Activated CD4-positive, alpha-beta memory T cell treated with anti-CD3 and anti-CD28 coated beads, Interleukin-2, amount 10 ng/mL, durations not matched to agents 7 days and 5 days (primary cell): ENCODE measurements at regions of chr3 and their contacts with region 1.

Region 1: DNA sequence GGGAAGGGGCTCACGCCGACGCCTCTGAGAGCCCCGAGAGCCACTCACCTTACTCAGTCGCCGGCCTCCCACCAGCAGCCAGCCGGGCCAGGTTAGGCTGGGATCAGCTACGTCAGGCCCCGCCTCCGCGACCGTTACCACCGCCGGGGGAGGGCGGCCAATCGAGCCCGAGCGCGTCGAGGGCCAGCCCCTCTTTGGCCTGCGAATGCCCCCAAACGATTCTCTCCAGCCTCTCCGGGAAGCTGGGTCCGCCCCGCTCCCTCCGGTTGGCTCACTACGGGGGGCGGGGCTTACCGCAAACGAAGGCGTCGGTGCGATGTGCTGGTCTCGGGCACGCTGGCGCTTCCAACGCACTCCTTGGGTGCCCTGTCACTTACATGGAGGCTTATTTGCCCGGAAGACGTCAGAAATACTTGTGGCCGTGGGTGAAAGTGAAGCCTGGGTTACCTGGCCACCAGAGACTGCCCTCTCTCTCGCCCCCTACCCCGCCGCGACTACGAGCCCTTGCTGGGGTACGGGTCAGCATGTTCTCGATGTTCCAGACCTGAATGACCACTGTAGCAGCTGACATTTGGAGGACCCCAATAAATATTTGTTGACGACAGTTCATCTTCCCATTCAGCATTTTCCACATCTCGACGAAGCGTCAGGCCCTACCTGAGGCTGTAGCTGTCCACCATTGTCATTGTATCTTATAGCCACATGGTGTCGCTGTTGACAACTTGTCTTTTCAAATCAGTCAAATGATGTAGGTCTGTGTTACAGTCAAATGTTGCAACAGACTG is at the start of gene CEP70:
- DNase-seq: peak; percentile 87
- H3K4me3 Mint-ChIP-seq: peak within 1 kb of the TSS; percentile 76
- H3K27ac Mint-ChIP-seq: peak within 1 kb of the TSS; percentile 69
- H3K4me1 Mint-ChIP-seq: peaks cover 11% of the 10 kb centered on the region
- H3K27me3 Mint-ChIP-seq: no peaks in the 10 kb centered on the region
- total RNA-seq, gene CEP70: 9.0 to 9.6 TPM

Region 2: DNA sequence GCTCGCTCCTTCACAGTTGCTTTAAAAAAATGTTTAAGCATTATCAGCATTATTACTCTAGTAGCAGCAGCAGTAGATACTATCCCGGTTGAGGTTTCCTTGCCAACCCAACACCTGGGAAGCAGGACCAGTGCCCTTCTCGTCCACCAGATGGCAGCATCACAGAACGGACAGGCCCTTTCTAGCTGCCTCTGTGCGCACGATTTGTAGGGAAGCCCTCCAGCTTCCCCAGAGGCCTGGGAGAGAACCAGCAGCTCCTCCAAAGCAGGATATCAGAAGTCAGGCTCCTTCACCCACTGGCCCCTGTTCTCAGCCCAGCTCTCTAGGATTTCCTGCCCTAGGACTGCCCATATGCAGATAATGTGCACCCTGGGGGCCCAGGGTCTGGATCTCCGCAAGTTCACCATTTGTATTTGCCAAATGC is 176.8 kb before region 1 on chr3:
- CTCF ChIA-PET with region 1: interaction called, 11 read pairs
- POLR2A ChIA-PET with region 1: no interaction called
- DNase-seq: peak; percentile 66
- H3K4me3 Mint-ChIP-seq: no peak overlapping the region
- H3K27ac Mint-ChIP-seq: no peak overlapping the region
- H3K4me1 Mint-ChIP-seq: peaks cover 1% of the 10 kb centered on the region
- H3K27me3 Mint-ChIP-seq: peaks cover 20% of the 10 kb centered on the region

Region 3: GRCh38 chr3:138434276-138434874 is 160.0 kb before region 1 on chr3 and contains the start of gene ESYT3:
- CTCF ChIA-PET with region 1: interaction called, 10 read pairs
- POLR2A ChIA-PET with region 1: interaction called, 6 read pairs
- DNase-seq: peak; percentile 72
- H3K4me3 Mint-ChIP-seq: peak within 1 kb of the TSS; percentile 72
- H3K27ac Mint-ChIP-seq: no peak within 1 kb of the TSS
- H3K4me1 Mint-ChIP-seq: peaks cover 15% of the 10 kb centered on the region
- H3K27me3 Mint-ChIP-seq: peaks cover 52% of the 10 kb centered on the region
- total RNA-seq, gene ESYT3: 0.43 to 0.50 TPM

Region 4: DNA sequence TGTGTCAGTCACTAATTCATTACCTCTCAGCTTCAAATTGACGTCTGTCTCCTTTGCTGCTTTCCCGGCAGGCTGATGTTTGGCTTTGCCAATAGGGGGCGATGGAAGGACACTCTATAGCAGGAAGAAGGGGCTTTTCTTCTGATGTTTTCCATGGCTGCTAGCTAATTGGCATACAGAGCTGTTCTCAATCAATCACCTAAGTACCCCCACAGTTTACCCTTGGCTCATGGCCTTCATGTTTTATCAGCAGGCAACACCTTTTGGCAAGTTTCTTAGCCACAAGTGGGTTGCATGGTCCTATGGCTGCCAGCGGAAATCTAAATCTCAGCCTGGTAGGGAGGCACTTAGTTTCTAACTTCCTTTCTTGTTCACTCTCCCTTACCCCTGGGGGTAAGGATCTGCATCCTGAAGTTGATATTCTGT is 114.9 kb before region 1 on chr3:
- CTCF ChIA-PET with region 1: interaction called, 12 read pairs
- POLR2A ChIA-PET with region 1: no interaction called
- DNase-seq: peak; percentile 55
- H3K4me3 Mint-ChIP-seq: no peak overlapping the region
- H3K27ac Mint-ChIP-seq: no peak overlapping the region
- H3K4me1 Mint-ChIP-seq: no peaks in the 10 kb centered on the region
- H3K27me3 Mint-ChIP-seq: peaks cover 8% of the 10 kb centered on the region

Region 5: GRCh38 chr3:138578141-138578540 is 16.2 kb before region 1 on chr3:
- CTCF ChIA-PET with region 1: interaction called, 15 read pairs
- POLR2A ChIA-PET with region 1: interaction called, 4 read pairs
- DNase-seq: no peak
- H3K4me3 Mint-ChIP-seq: no peak overlapping the region
- H3K27ac Mint-ChIP-seq: no peak overlapping the region
- H3K4me1 Mint-ChIP-seq: peaks cover 14% of the 10 kb centered on the region
- H3K27me3 Mint-ChIP-seq: peaks cover under 1% of the 10 kb centered on the region

Region 6: DNA sequence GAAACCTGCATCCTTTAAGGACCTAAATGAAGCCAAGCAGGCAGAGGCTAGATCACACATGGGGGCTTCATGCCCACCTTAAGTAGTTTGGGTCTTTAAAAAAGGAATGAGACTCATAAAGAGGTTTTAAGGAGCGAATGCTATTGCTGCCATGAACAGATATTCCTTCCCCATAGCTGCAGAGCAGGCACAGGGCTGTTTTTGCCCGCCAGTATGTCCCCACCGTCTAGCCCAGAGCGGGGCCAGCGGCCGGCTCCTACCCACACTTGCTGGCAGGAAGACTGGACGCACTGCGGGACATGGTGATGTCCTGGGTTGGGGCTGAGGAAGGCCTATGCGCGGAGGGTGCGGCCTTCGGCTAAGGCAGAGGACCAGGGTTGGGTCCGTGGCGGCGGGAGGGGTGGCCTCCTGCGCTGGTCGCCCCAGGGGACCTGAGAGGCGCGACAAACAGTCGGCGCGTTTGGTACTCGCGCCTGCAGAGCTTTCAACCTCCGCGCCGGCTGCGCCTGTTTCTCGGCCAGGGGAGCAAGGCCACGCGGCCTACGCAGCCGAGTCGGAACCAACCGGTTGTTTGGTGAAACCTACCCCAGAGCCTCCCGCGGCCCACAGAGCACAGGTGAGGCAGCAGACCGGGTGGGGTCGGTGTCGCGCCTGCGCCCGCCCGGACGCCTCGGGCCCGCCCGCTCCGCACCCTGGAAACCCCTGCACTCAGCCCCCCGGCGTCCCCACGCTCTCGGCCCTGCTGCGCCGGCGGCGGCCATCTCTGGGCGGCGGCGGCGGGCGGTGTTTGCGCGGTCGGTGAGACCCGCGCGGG is 14.2 kb after region 1 on chr3 and contains the start of gene FAIM:
- CTCF ChIA-PET with region 1: interaction called, 7 read pairs
- POLR2A ChIA-PET with region 1: interaction called, 20 read pairs
- DNase-seq: peak; percentile 68
- H3K4me3 Mint-ChIP-seq: peak within 1 kb of the TSS; percentile 83
- H3K27ac Mint-ChIP-seq: peak within 1 kb of the TSS; percentile 89
- H3K4me1 Mint-ChIP-seq: peaks cover 11% of the 10 kb centered on the region
- H3K27me3 Mint-ChIP-seq: peaks cover 3% of the 10 kb centered on the region
- total RNA-seq, gene FAIM: 2.2 to 3.0 TPM

Region 7: GRCh38 chr3:138640537-138640936 is 46.2 kb after region 1 on chr3:
- CTCF ChIA-PET with region 1: no interaction called
- POLR2A ChIA-PET with region 1: no interaction called
- DNase-seq: no peak
- H3K4me3 Mint-ChIP-seq: no peak overlapping the region
- H3K27ac Mint-ChIP-seq: no peak overlapping the region
- H3K4me1 Mint-ChIP-seq: no peaks in the 10 kb centered on the region
- H3K27me3 Mint-ChIP-seq: no peaks in the 10 kb centered on the region

Region 8: GRCh38 chr3:138923531-138923994 is 329.2 kb after region 1 on chr3:
- CTCF ChIA-PET with region 1: interaction called, 181 read pairs
- POLR2A ChIA-PET with region 1: interaction called, 3 read pairs
- DNase-seq: peak; percentile 85
- H3K4me3 Mint-ChIP-seq: no peak overlapping the region
- H3K27ac Mint-ChIP-seq: no peak overlapping the region
- H3K4me1 Mint-ChIP-seq: peaks cover 3% of the 10 kb centered on the region
- H3K27me3 Mint-ChIP-seq: peaks cover 6% of the 10 kb centered on the region